ENCODE measurements at regions of chr2 and their contacts with region 1.

Region 1: GRCh38 chr2:224520064-224520463 is 65.1 kb downstream of the CUL3 start:
- DNase-seq: no peak
- ATAC-seq: no peak
- H3K4me3 ChIP-seq: no peak overlapping the region
- H3K27ac ChIP-seq: no peak overlapping the region
- H3K4me1 ChIP-seq: peaks cover 0 to 71% (median 50%) of the 10 kb centered on the region in 9 donors
- H3K27me3 ChIP-seq: no peaks in the 10 kb centered on the region
- CTCF ChIP-seq: no peak

Region 2: GRCh38 chr2:224442071-224442967 is 77.7 kb before region 1 on chr2:
- intact Hi-C with region 1: no loop called
- DNase-seq: peak in 1 of 2 donors; percentile 33
- ATAC-seq: peak in 5 of 8 donors; percentile 22 to 67 (median 64)
- H3K4me3 ChIP-seq: peak overlapping the region; percentile 41 to 63 (median 58)
- H3K27ac ChIP-seq: peak overlapping the region in 3 of 10 donors; percentile 8 to 64 (median 53)
- H3K4me1 ChIP-seq: peaks cover 0 to 14% (median 9%) of the 10 kb centered on the region in 9 donors
- H3K27me3 ChIP-seq: peaks cover 0 to 22% (median 10%) of the 10 kb centered on the region in 7 donors
- CTCF ChIP-seq: no peak

Region 3: GRCh38 chr2:224551693-224552092 is 31.6 kb after region 1 on chr2:
- intact Hi-C with region 1: loop called in 1 of 10 experiments (anchors 1 kb)
- DNase-seq: no peak
- ATAC-seq: no peak
- H3K4me3 ChIP-seq: no peak overlapping the region
- H3K27ac ChIP-seq: no peak overlapping the region
- H3K4me1 ChIP-seq: peaks cover 0 to 16% (median 0%) of the 10 kb centered on the region in 9 donors
- H3K27me3 ChIP-seq: no peaks in the 10 kb centered on the region
- CTCF ChIP-seq: no peak

Region 4: GRCh38 chr2:224576088-224576715 is 56.1 kb after region 1 on chr2:
- intact Hi-C with region 1: loop called in 2 of 10 experiments (anchors 10 kb)
- DNase-seq: no peak
- ATAC-seq: no peak
- H3K4me3 ChIP-seq: no peak overlapping the region
- H3K27ac ChIP-seq: no peak overlapping the region
- H3K4me1 ChIP-seq: peaks cover 3 to 100% (median 85%) of the 10 kb centered on the region in 9 donors
- H3K27me3 ChIP-seq: no peaks in the 10 kb centered on the region
- CTCF ChIP-seq: no peak

Region 5: DNA sequence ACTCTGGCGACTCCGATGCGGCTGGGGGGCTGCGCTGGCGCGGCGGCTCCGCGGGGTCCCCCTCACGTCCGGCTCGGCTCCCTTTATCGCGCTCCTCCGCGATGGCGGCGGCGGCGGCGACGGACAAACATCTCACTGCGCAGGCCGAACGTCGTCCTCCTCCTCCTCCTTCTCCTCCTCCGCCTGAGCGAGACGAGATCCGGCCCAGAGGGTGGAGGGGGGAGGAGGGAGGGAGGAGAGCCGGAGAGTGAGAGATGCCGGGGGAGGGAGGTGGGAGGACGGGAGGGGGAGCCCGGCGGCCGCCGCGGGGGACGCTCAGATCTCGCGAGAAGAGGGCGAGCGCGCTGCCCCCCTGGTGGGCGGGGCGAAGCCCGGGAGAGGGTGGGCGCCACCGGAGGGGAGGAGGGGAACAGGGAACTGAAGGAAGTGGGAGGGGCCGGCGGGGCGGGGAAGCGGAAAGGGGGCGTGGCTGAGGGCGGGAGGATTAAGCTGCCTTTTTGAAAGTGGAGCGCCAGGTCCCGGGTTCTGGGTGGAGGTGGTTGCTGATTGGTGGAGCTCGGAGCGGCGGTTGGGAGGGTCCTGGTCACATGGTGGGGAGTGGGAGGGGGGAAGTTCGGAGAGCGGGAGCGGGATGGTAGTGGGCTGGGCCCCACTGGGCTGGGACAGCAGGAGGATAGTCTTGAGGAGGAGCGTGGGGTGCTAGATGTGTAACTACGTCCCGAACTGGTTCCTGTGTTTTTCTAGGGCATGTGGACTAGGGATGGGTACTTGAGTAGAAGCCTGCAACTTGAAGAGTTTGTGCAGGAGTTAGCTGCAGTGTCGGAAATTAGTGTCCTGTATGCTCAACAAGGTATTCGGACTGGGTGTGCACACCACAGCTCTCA is 65.4 kb after region 1 on chr2 and contains the start of gene CUL3:
- intact Hi-C with region 1: loop called in 1 of 10 experiments (anchors 10 kb)
- DNase-seq: peak; percentile 99 to 100
- ATAC-seq: peak; percentile 97 to 100 (median 99)
- H3K4me3 ChIP-seq: peak within 1 kb of the TSS; percentile 72 to 85 (median 78)
- H3K27ac ChIP-seq: peak within 1 kb of the TSS; percentile 85 to 96 (median 90)
- H3K4me1 ChIP-seq: peaks cover 0 to 52% (median 32%) of the 10 kb centered on the region in 9 donors
- H3K27me3 ChIP-seq: no peaks in the 10 kb centered on the region
- CTCF ChIP-seq: no peak
- total RNA-seq, gene CUL3: 60.2 to 87.9 (median 69.8) TPM